CD14-positive monocyte (primary cell): ENCODE measurements at regions of chr9 and their contacts with region 1.

Region 1: DNA sequence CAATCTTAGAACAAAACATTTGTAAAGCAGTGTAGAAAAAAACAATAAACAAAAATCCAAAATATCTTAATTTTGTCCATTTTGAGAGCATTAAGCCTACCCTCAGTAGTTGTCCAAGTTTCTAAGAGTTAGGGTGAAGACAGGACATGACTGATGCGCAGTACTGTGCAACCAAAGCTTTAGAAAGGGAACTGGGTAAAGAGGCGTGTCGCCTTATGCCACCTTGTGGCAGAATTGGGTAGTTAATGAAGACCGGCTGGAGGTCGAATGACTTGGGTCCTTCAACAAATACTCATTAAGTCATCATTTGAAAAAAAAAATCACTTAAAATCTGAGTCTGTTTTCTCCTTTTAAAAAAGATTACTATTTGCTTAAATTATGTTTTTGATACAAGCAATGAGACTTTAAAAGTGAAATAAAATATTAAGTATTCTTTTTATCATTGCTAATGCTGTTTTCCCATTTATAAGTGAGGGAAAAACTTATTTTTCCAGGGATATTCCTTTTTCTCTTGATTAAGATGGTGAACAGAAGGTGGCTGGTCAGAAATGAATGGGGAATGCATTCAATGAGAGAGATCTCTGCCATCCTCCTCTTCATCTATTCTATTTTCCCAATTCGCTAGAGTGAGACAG is 3.5 kb upstream of the RNF20 start:
- DNase-seq: peak; percentile 80 to 85 (median 83)
- H3K4me3 ChIP-seq: no peak overlapping the region
- H3K4me3 Mint-ChIP-seq: no peak overlapping the region
- H3K27ac ChIP-seq: no peak overlapping the region
- H3K27ac Mint-ChIP-seq: no peak overlapping the region
- H3K4me1 ChIP-seq: peaks cover 11 to 17% of the 10 kb centered on the region in 2 donors
- H3K4me1 Mint-ChIP-seq: peaks cover 14% of the 10 kb centered on the region
- H3K27me3 ChIP-seq: peaks cover 0 to 4% of the 10 kb centered on the region in 2 donors
- H3K27me3 Mint-ChIP-seq: peaks cover 2 to 7% (median 2%) of the 10 kb centered on the region in 3 donors
- CTCF ChIP-seq: peak; percentile 92

Region 2: DNA sequence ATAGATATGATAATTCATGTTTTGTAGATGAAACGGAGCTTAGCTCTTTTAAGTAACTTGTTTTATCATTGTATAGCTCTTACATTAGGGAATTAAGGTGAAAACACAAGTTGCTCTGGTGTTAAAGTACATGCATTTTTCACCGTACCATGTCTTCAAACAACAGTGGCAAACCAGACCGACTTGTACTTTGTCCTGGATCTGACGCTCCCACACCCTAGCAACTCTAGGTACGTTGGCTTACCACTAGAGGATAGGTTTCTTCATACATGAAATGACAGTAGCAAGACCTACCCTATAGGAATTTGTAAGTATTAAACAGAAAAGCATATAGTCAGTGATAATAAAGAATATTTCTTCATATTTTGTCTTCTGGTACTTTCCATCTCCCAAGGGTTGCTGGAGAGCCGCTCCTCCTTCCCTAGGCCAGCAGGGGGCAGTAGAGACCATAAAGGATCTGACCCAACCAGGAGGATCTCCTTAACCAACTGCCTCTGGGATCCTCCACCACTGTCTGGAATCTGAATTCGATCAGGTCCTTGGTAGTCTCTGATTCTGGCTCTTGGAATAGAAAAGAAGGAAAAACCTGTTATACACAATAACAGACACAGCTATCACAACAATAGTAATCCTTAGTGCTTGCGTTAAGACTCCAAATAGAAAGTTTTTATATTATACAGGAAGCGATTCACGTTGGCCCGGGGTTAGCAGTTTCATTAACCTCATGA is 815.7 kb before region 1 on chr9:
- intact Hi-C with region 1: loop called in 1 of 2 experiments (anchors 10 kb)
- DNase-seq: peak in 2 of 3 donors; percentile 24 to 31
- H3K4me3 ChIP-seq: no peak overlapping the region
- H3K4me3 Mint-ChIP-seq: no peak overlapping the region
- H3K27ac ChIP-seq: no peak overlapping the region
- H3K27ac Mint-ChIP-seq: no peak overlapping the region
- H3K4me1 ChIP-seq: no peaks in the 10 kb centered on the region
- H3K4me1 Mint-ChIP-seq: no peaks in the 10 kb centered on the region
- H3K27me3 ChIP-seq: no peaks in the 10 kb centered on the region
- H3K27me3 Mint-ChIP-seq: peaks cover 0 to 2% (median under 1%) of the 10 kb centered on the region in 3 donors
- CTCF ChIP-seq: peak; percentile 85

Region 3: DNA sequence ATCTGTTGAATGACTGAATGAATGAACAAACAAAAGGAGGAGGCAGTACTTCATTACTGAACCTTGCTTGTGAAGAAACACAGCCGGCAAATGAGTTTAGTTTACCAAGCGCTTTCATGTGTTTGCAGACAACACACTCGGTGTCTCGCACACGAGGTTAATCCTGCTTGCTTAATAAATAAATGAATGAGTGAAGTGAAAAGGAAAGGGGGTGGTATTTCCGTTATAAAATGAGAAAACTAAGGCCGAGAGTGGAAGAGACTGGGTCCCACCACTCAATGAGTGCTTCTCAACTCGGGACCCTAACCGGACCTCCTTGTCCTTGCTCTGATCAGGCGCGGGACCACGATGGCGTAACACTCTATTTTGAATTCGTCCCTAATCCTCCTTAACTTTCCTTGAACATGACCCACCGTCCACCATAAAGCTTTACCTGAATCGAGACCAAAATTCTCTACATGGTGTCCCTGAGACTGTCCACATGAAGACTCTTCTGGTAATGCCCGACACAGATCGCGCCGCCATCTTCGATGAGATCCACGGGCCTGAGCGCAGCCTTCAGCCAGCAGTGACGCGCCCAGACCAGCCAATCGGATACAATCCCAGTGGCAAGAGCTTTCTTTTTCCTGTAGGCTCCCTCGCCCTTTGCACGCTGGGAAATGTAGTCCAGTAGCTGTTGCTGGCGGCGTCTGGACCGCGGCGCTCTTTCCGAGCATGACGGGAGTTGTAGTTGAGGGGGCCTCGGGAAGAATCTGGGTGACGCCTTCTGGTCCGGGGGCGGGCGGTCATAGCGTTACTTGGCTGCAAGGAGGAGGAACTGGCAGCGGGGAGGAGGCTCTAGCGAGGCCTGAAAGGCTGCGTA is 131.9 kb before region 1 on chr9 and contains the starts of genes MRPL50 and ZNF189:
- intact Hi-C with region 1: loop called (anchors 5 kb)
- DNase-seq: peak; percentile 98 to 99 (median 98)
- H3K4me3 ChIP-seq: peak within 1 kb of the TSS; percentile 87 to 92 (median 91)
- H3K4me3 Mint-ChIP-seq: peak within 1 kb of the TSS; percentile 90 to 99
- H3K27ac ChIP-seq: peak within 1 kb of the TSS; percentile 79 to 98
- H3K27ac Mint-ChIP-seq: peak within 1 kb of the TSS; percentile 96 to 100 (median 99)
- H3K4me1 ChIP-seq: peaks cover 21 to 34% of the 10 kb centered on the region in 2 donors
- H3K4me1 Mint-ChIP-seq: peaks cover 33% of the 10 kb centered on the region
- H3K27me3 ChIP-seq: no peaks in the 10 kb centered on the region
- H3K27me3 Mint-ChIP-seq: no peaks in the 10 kb centered on the region
- CTCF ChIP-seq: no peak
- polyA plus RNA-seq, gene MRPL50: 1.9 to 4.9 (median 4.8) TPM
- polyA plus RNA-seq, gene ZNF189: 0.72 to 1.8 (median 1.2) TPM

Region 4: GRCh38 chr9:101465392-101465791 is 64.8 kb before region 1 on chr9:
- intact Hi-C with region 1: loop called (anchors 5 to 10 kb)
- DNase-seq: peak in 2 of 3 donors; percentile 9 to 14
- H3K4me3 ChIP-seq: no peak overlapping the region
- H3K4me3 Mint-ChIP-seq: no peak overlapping the region
- H3K27ac ChIP-seq: no peak overlapping the region
- H3K27ac Mint-ChIP-seq: no peak overlapping the region
- H3K4me1 ChIP-seq: no peaks in the 10 kb centered on the region
- H3K4me1 Mint-ChIP-seq: peaks cover 5% of the 10 kb centered on the region
- H3K27me3 ChIP-seq: no peaks in the 10 kb centered on the region
- H3K27me3 Mint-ChIP-seq: peaks cover 2 to 9% (median 9%) of the 10 kb centered on the region in 3 donors
- CTCF ChIP-seq: no peak